ENCODE measurements at regions of chr17 and their contacts with region 1.

Region 1: GRCh38 chr17:4859816-4860625 is 26.9 kb downstream of the MINK1 start:
- DNase-seq: no peak
- H3K4me3 ChIP-seq: no peak overlapping the region
- H3K27ac ChIP-seq: no peak overlapping the region
- H3K4me1 ChIP-seq: peaks cover 10% of the 10 kb centered on the region
- H3K27me3 ChIP-seq: no peaks in the 10 kb centered on the region
- CTCF ChIP-seq: no peak

Region 2: GRCh38 chr17:4673986-4674684 is 185.9 kb before region 1 on chr17:
- CTCF ChIA-PET with region 1: no interaction called
- POLR2A ChIA-PET with region 1: interaction called, 22 read pairs
- intact Hi-C with region 1: no loop called
- DNase-seq: no peak
- H3K4me3 ChIP-seq: no peak overlapping the region
- H3K27ac ChIP-seq: no peak overlapping the region
- H3K4me1 ChIP-seq: no peaks in the 10 kb centered on the region
- H3K27me3 ChIP-seq: no peaks in the 10 kb centered on the region
- CTCF ChIP-seq: no peak